AG04450 (cell line): ENCODE measurements at regions of chr3 and their contacts with region 1.

Region 1: GRCh38 chr3:32406486-32407408 is 15.1 kb downstream of the CMTM7 start:
- DNase-seq: no peak
- H3K4me3 ChIP-seq: no peak overlapping the region
- H3K27ac ChIP-seq: no peak overlapping the region
- H3K27me3 ChIP-seq: no peaks in the 10 kb centered on the region
- CTCF ChIP-seq: no peak

Region 2: GRCh38 chr3:32606277-32606676 is 199.5 kb after region 1 on chr3:
- CTCF ChIA-PET with region 1: no interaction called
- POLR2A ChIA-PET with region 1: interaction called, 17 read pairs
- DNase-seq: no peak
- H3K4me3 ChIP-seq: no peak overlapping the region
- H3K27ac ChIP-seq: no peak overlapping the region
- H3K27me3 ChIP-seq: peaks cover 5% of the 10 kb centered on the region
- CTCF ChIP-seq: no peak